ENCODE measurements at regions of chr7 and their contacts with region 1.

Region 1: GRCh38 chr7:93902777-93903423 is 3.5 kb upstream of the GNGT1 start:
- DNase-seq: no peak
- ATAC-seq: peak; percentile 72
- H3K4me3 ChIP-seq: no peak overlapping the region
- H3K27ac ChIP-seq: no peak overlapping the region
- H3K4me1 ChIP-seq: no peaks in the 10 kb centered on the region
- H3K27me3 ChIP-seq: no peaks in the 10 kb centered on the region
- CTCF ChIP-seq: peak; percentile 80

Region 2: GRCh38 chr7:93551063-93551904 is 351.6 kb before region 1 on chr7:
- intact Hi-C with region 1: no loop called
- DNase-seq: no peak
- ATAC-seq: peak; percentile 66
- H3K4me3 ChIP-seq: no peak overlapping the region
- H3K27ac ChIP-seq: no peak overlapping the region
- H3K4me1 ChIP-seq: no peaks in the 10 kb centered on the region
- H3K27me3 ChIP-seq: no peaks in the 10 kb centered on the region
- CTCF ChIP-seq: peak; percentile 53

Region 3: GRCh38 chr7:94087664-94088352 is 184.9 kb after region 1 on chr7:
- intact Hi-C with region 1: loop called (anchors 10 kb)
- DNase-seq: no peak
- ATAC-seq: peak; percentile 88
- H3K4me3 ChIP-seq: peak overlapping the region; percentile 29
- H3K27ac ChIP-seq: no peak overlapping the region
- H3K4me1 ChIP-seq: peaks cover 4% of the 10 kb centered on the region
- H3K27me3 ChIP-seq: no peaks in the 10 kb centered on the region
- CTCF ChIP-seq: peak; percentile 80

Measured in upper lobe of right lung (tissue), 1 donor.